Activated T-helper 1 cell treated with anti-CD3 and anti-CD28 coated beads, Interleukin-12 subunit alpha, Interleukin-12 subunit beta, Interleukin-2, Interleukin-4 antibody, amounts not matched to agents 30 ng/mL and 10 ng/mL and 1 ng/mL, durations not matched to agents 14 hours and 24 hours and 36 hours (primary cell): ENCODE measurements at regions of chr18 and their contacts with region 1.

Region 1: GRCh38 chr18:2655178-2655953 is at the start of gene SMCHD1:
- DNase-seq: peak; percentile 86
- H3K4me3 Mint-ChIP-seq: peak within 1 kb of the TSS; percentile 88
- H3K27ac Mint-ChIP-seq: peak within 1 kb of the TSS; percentile 96
- H3K4me1 Mint-ChIP-seq: peaks cover 36% of the 10 kb centered on the region
- H3K27me3 Mint-ChIP-seq: peaks cover 2% of the 10 kb centered on the region
- total RNA-seq, gene SMCHD1: 98.6 and 112 TPM in 2 replicates

Region 2: GRCh38 chr18:2589345-2590068 is 65.9 kb before region 1 on chr18:
- intact Hi-C with region 1: loop called (anchors 1 kb)
- DNase-seq: no peak
- H3K4me3 Mint-ChIP-seq: peak overlapping the region; percentile 63
- H3K27ac Mint-ChIP-seq: peak overlapping the region; percentile 77
- H3K4me1 Mint-ChIP-seq: peaks cover 58% of the 10 kb centered on the region
- H3K27me3 Mint-ChIP-seq: no peaks in the 10 kb centered on the region

Region 3: GRCh38 chr18:2681993-2682603 is 26.7 kb after region 1 on chr18:
- intact Hi-C with region 1: loop called (anchors 2 kb)
- DNase-seq: no peak
- H3K4me3 Mint-ChIP-seq: no peak overlapping the region
- H3K27ac Mint-ChIP-seq: peak overlapping the region; percentile 72
- H3K4me1 Mint-ChIP-seq: peaks cover 61% of the 10 kb centered on the region
- H3K27me3 Mint-ChIP-seq: no peaks in the 10 kb centered on the region

Region 4: GRCh38 chr18:2978646-2979045 is 323.3 kb after region 1 on chr18:
- intact Hi-C with region 1: loop called (anchors 5 kb)
- DNase-seq: no peak
- H3K4me3 Mint-ChIP-seq: peak overlapping the region; percentile 71
- H3K27ac Mint-ChIP-seq: peak overlapping the region; percentile 89
- H3K4me1 Mint-ChIP-seq: peaks cover 90% of the 10 kb centered on the region
- H3K27me3 Mint-ChIP-seq: no peaks in the 10 kb centered on the region